HEK293 (cell line): ENCODE measurements at regions of chr5 and their contacts with region 1.

Region 1: DNA sequence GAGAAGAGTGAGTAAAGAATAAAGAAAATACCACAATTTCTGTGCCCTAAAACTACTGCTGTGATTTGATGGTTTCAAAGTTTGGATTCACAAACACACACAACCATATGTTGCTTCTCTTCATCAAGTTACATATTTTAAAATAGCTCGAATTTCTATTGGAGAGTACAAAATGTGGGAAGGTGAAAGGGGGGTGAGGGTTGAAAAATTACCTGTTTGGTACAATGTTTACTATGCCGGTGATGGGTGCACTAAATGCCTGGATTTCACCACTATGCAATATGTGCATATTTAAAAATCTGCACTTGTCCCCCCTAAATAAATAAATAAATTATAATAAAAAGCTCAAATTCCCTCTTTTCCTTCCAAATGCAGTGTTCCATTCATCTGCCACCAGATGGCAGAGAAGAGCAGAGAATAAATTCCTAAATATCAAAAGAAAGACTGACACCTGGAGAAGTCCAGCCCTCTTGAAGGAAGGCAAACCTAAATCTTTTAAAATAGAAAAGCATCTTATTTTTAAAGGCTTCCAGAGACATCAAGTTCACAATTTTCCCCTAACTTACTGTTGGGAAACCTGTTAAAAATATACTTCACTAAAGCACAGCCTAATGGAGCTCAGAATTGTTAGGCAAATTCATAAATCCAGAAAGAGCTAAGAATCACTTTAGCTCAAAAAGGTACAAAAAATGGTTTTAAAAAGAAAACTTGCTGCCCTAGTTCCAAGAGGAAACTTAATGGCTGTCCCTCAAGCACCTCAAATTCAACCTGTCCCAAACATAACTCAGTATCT is 24.8 kb upstream of the HNRNPA0 start:
- H3K4me3 ChIP-seq: no peak overlapping the region
- H3K27ac ChIP-seq: no peak overlapping the region
- H3K4me1 ChIP-seq: no peaks in the 10 kb centered on the region
- CTCF ChIP-seq: no peak

Region 2: GRCh38 chr5:137754126-137754960 is 24.6 kb before region 1 on chr5 and contains the start of gene HNRNPA0:
- CTCF ChIA-PET with region 1: interaction called, 10 read pairs
- POLR2A ChIA-PET with region 1: interaction called, 3 read pairs
- H3K4me3 ChIP-seq: peak within 1 kb of the TSS; percentile 72
- H3K27ac ChIP-seq: peak within 1 kb of the TSS; percentile 99
- H3K4me1 ChIP-seq: no peaks in the 10 kb centered on the region
- CTCF ChIP-seq: peak; percentile 86

Region 3: DNA sequence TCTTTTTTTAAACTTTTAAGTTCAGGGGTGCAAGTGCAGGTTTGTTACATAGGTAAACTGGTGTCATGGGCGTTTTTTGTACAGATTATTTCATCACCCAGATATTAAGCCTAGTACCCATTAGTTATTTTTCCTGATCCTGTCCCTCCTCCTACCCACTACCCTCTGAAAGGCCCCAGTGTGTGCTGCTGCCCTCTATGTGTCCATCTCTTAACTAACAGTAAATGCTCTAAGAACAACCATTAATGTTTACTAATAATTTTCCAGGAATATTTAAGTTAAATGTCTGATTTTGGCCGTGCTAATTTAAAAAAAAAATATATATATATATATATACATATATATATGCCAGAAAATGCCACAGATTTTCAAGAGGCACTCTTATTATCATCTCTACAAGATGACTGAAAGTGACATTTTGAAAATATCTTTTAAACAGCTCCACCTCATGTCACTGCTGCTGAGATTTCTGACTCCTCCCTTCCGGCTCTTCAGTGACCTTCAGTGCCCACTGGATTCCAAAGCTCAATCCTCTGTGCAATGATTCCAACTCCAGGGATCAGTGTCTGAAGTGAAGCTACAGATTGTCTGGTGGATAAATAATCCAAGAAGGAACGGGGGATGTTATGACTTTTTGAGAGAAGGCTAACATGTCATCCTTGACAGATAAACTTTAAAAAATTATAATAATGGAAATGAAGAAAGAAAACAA is 21.9 kb after region 1 on chr5:
- CTCF ChIA-PET with region 1: interaction called, 16 read pairs
- POLR2A ChIA-PET with region 1: no interaction called
- H3K4me3 ChIP-seq: no peak overlapping the region
- H3K27ac ChIP-seq: no peak overlapping the region
- H3K4me1 ChIP-seq: peaks cover 8% of the 10 kb centered on the region
- CTCF ChIP-seq: no peak

Region 4: DNA sequence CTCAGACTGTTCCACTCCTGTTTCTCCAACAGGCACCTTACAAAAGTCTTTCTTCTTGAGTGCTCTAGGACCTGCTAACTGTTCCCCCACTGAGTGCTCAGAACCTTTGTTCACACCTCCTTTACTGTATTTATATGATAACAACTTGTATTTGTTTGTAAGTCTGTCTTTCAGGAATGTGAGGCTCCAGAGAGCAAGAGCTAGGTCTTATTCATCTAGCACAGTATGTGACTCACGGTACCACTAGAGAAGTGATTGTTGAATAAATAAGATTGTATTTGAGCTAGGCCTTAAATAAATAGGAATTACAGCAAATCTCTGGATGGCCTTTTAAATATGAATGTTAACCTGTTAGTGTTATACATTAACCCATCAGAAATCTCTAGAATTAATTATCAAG is 46.2 kb after region 1 on chr5:
- CTCF ChIA-PET with region 1: interaction called, 16 read pairs
- POLR2A ChIA-PET with region 1: no interaction called
- H3K4me3 ChIP-seq: no peak overlapping the region
- H3K27ac ChIP-seq: no peak overlapping the region
- H3K4me1 ChIP-seq: no peaks in the 10 kb centered on the region
- CTCF ChIP-seq: no peak

Region 5: DNA sequence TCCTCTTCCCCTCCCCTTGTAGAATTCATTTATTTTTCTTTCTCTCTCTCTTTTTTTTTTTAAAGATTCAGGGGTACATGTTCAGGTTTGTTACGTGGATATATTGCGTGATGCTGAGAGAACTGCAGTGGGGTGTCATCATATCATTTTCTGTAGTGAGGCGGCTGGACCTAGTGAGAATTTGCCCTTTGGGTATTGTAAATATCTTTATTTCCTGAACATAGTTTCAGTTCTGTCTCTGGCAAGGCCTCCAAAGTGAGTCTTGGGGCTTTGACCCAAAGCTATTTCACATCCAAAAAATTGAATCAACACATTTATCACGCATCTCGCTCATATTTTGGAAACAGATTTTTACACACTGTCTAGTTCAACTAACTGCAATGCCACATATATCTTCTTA is 63.3 kb after region 1 on chr5:
- CTCF ChIA-PET with region 1: interaction called, 11 read pairs
- POLR2A ChIA-PET with region 1: no interaction called
- H3K4me3 ChIP-seq: no peak overlapping the region
- H3K27ac ChIP-seq: no peak overlapping the region
- H3K4me1 ChIP-seq: peaks cover 15% of the 10 kb centered on the region
- CTCF ChIP-seq: no peak

Region 6: GRCh38 chr5:138065102-138065501 is 286.1 kb after region 1 on chr5:
- CTCF ChIA-PET with region 1: interaction called, 46 read pairs
- POLR2A ChIA-PET with region 1: no interaction called
- H3K4me3 ChIP-seq: no peak overlapping the region
- H3K27ac ChIP-seq: no peak overlapping the region
- H3K4me1 ChIP-seq: no peaks in the 10 kb centered on the region
- CTCF ChIP-seq: 0 out of 2 replicates have a peak, but pooled peaks have one; percentile 32

Region 7: GRCh38 chr5:138128334-138128733 is 349.4 kb after region 1 on chr5:
- CTCF ChIA-PET with region 1: interaction called, 15 read pairs
- POLR2A ChIA-PET with region 1: interaction called, 3 read pairs
- H3K4me3 ChIP-seq: no peak overlapping the region
- H3K27ac ChIP-seq: no peak overlapping the region
- H3K4me1 ChIP-seq: peaks cover 12% of the 10 kb centered on the region
- CTCF ChIP-seq: no peak